Activated CD4-positive, alpha-beta memory T cell treated with anti-CD3 and anti-CD28 coated beads, Interleukin-2, amount 10 ng/mL, durations not matched to agents 7 days and 5 days (primary cell): ENCODE measurements at regions of chr6 and their contacts with region 1.

Region 1: GRCh38 chr6:24581084-24581669 is 64.8 kb downstream of the KIAA0319 start:
- DNase-seq: peak; percentile 77
- H3K4me3 Mint-ChIP-seq: no peak overlapping the region
- H3K27ac Mint-ChIP-seq: no peak overlapping the region
- H3K4me1 Mint-ChIP-seq: peaks cover 3% of the 10 kb centered on the region
- H3K27me3 Mint-ChIP-seq: peaks cover 11% of the 10 kb centered on the region

Region 2: DNA sequence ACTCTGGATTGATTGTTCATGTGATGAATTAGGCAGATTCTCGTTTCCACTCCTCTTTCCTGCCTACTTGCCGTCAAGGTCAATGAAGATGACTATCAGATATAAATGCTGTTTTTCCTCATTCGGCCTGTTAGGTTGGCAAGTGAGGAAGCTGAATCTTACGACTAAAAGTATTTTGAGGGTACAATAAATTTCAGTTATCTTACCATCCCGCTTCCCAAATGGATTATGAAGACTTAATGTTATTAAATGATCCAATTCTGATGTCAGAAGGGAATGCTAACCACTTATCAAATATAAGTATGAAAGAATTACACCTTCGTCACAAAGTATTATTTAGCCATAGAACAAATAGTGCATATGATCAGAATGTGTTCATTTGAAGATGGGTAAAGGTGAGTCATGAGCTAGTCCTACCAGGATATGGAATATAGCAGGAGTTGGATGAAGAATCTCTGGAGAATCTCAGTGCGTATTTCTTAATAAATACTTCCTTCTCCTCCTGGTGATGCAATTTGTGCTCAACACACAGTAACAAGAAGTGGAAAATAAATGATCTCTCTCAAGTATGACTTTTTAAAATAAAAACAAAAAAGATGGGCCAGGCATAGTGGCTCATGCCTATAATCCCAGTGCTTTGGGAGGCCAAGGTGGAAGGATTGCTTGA is 96.4 kb before region 1 on chr6:
- CTCF ChIA-PET with region 1: no interaction called
- POLR2A ChIA-PET with region 1: no interaction called
- DNase-seq: no peak
- H3K4me3 Mint-ChIP-seq: no peak overlapping the region
- H3K27ac Mint-ChIP-seq: no peak overlapping the region
- H3K4me1 Mint-ChIP-seq: peaks cover 7% of the 10 kb centered on the region
- H3K27me3 Mint-ChIP-seq: no peaks in the 10 kb centered on the region

Region 3: DNA sequence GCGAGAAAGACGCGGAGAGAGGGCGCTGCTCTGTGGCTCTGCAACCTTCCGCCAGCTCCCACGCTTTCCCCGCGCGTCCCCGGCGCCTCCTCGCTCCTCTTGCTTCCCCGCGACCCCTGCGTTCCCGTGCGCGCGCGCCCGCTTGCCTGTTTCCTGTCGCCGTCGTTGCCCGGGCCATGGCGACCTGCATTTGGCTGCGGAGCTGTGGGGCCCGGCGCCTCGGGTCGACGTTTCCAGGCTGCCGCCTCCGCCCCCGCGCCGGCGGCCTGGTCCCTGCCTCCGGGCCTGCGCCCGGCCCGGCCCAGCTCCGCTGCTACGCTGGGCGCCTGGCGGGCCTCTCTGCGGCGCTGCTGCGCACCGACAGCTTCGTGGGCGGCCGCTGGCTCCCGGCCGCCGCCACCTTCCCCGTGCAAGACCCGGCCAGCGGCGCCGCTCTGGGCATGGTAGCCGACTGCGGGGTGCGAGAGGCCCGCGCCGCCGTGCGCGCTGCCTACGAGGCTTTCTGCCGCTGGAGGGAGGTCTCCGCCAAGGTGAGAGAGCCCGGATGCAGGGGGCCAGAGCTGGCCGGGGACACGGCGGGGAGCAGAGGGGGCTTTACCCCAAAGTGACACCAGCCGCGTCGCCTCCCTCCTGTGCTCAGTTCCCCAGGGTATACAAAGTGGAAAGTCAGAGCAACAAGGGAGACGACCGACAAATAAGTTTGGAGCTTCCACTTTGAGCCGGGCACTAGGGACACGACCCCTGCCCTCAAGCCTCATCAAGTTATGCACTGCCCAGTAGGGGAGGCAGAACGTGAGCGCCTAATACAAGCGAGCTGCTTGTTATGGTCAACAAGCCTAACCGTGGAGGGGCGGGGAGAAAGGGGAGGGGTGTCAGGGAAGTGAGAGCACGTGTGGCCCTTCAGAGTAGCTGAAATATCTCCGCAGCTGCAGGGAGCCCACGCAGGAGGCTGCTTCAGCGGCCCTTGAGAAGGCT is 86.1 kb before region 1 on chr6 and contains the start of gene ALDH5A1:
- CTCF ChIA-PET with region 1: interaction called, 10 read pairs
- POLR2A ChIA-PET with region 1: no interaction called
- DNase-seq: peak; percentile 70
- H3K4me3 Mint-ChIP-seq: peak within 1 kb of the TSS; percentile 71
- H3K27ac Mint-ChIP-seq: no peak within 1 kb of the TSS
- H3K4me1 Mint-ChIP-seq: peaks cover 14% of the 10 kb centered on the region
- H3K27me3 Mint-ChIP-seq: no peaks in the 10 kb centered on the region
- total RNA-seq, gene ALDH5A1: 2.5 to 3.7 TPM

Region 4: GRCh38 chr6:24568683-24569082 is 12.5 kb before region 1 on chr6:
- CTCF ChIA-PET with region 1: interaction called, 13 read pairs
- POLR2A ChIA-PET with region 1: no interaction called
- DNase-seq: no peak
- H3K4me3 Mint-ChIP-seq: no peak overlapping the region
- H3K27ac Mint-ChIP-seq: no peak overlapping the region
- H3K4me1 Mint-ChIP-seq: no peaks in the 10 kb centered on the region
- H3K27me3 Mint-ChIP-seq: peaks cover 5% of the 10 kb centered on the region

Region 5: GRCh38 chr6:24595512-24596217 is 14.5 kb after region 1 on chr6:
- CTCF ChIA-PET with region 1: interaction called, 11 read pairs
- POLR2A ChIA-PET with region 1: interaction called, 4 read pairs
- DNase-seq: no peak
- H3K4me3 Mint-ChIP-seq: no peak overlapping the region
- H3K27ac Mint-ChIP-seq: no peak overlapping the region
- H3K4me1 Mint-ChIP-seq: no peaks in the 10 kb centered on the region
- H3K27me3 Mint-ChIP-seq: peaks cover 2% of the 10 kb centered on the region

Region 6: GRCh38 chr6:24692848-24693592 is 111.8 kb after region 1 on chr6:
- CTCF ChIA-PET with region 1: interaction called, 22 read pairs
- POLR2A ChIA-PET with region 1: no interaction called
- DNase-seq: no peak
- H3K4me3 Mint-ChIP-seq: no peak overlapping the region
- H3K27ac Mint-ChIP-seq: no peak overlapping the region
- H3K4me1 Mint-ChIP-seq: peaks cover 8% of the 10 kb centered on the region
- H3K27me3 Mint-ChIP-seq: no peaks in the 10 kb centered on the region

Region 7: GRCh38 chr6:24699521-24700359 is 118.6 kb after region 1 on chr6:
- CTCF ChIA-PET with region 1: interaction called, 23 read pairs
- POLR2A ChIA-PET with region 1: no interaction called
- DNase-seq: no peak
- H3K4me3 Mint-ChIP-seq: no peak overlapping the region
- H3K27ac Mint-ChIP-seq: no peak overlapping the region
- H3K4me1 Mint-ChIP-seq: peaks cover 14% of the 10 kb centered on the region
- H3K27me3 Mint-ChIP-seq: no peaks in the 10 kb centered on the region